ENCODE measurements at regions of chr9 and their contacts with region 1.

Region 1: GRCh38 chr9:78004478-78005229 is 27.0 kb downstream of the GNAQ start:
- DNase-seq: peak in 3 of 6 donors; percentile 34 to 46 (median 44)
- ATAC-seq: peak; percentile 87 to 94 (median 90)
- H3K4me3 ChIP-seq: no peak overlapping the region
- H3K27ac ChIP-seq: peak overlapping the region in 2 of 4 donors; percentile 23 to 37
- H3K4me1 ChIP-seq: peaks cover 21 to 41% (median 23%) of the 10 kb centered on the region in 3 donors
- H3K27me3 ChIP-seq: no peaks in the 10 kb centered on the region
- CTCF ChIP-seq: peak in 3 of 4 donors; percentile 23 to 55 (median 37)

Region 2: DNA sequence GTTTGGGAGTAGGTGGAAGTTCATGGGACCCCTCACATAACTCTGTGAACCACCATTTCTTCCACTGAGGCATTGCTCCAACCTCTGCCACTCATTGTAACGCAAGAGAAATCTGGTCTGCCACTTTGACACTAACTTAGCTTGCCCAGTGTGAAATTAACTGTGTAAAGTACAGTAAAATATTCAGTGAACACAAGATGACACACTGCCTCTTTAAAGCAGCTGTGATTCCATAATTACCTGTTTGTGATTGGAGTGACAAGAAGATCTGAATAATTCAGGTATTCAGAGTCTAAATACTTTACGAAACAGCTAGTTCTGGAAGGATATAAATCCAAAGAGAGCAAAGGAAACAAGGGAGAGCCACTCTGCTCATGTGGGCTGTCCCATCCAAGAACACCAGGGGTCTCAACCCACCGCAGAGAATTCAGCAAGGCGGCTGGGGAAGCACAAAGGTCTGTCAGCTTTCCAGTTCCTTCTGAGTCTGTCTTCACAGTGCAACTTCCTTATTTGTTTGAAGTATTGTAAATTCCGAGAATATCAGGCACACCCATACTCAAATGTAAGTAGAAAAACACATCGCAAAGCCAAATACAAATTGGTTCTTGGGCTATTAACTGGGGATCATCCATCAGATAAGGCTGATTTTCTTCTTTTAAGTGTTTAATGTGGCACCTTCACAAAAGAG is 60.0 kb before region 1 on chr9:
- intact Hi-C with region 1: loop called in 1 of 3 experiments (anchors 10 kb)
- DNase-seq: no peak
- ATAC-seq: peak in 3 of 4 donors; percentile 33 to 56 (median 41)
- H3K4me3 ChIP-seq: no peak overlapping the region
- H3K27ac ChIP-seq: peak overlapping the region in 1 of 4 donors; percentile 17
- H3K4me1 ChIP-seq: peaks cover 19 to 40% (median 27%) of the 10 kb centered on the region in 3 donors
- H3K27me3 ChIP-seq: no peaks in the 10 kb centered on the region
- CTCF ChIP-seq: no peak

Region 3: GRCh38 chr9:78064075-78064474 is 59.4 kb after region 1 on chr9:
- intact Hi-C with region 1: no loop called
- DNase-seq: peak in 1 of 6 donors; percentile 9
- ATAC-seq: peak in 1 of 4 donors; percentile 67
- H3K4me3 ChIP-seq: no peak overlapping the region
- H3K27ac ChIP-seq: no peak overlapping the region
- H3K4me1 ChIP-seq: no peaks in the 10 kb centered on the region
- H3K27me3 ChIP-seq: no peaks in the 10 kb centered on the region
- CTCF ChIP-seq: no peak

Region 4: GRCh38 chr9:79073201-79073600 is 1068.5 kb after region 1 on chr9:
- intact Hi-C with region 1: no loop called
- DNase-seq: no peak
- ATAC-seq: no peak
- H3K4me3 ChIP-seq: no peak overlapping the region
- H3K27ac ChIP-seq: no peak overlapping the region
- H3K4me1 ChIP-seq: no peaks in the 10 kb centered on the region
- H3K27me3 ChIP-seq: no peaks in the 10 kb centered on the region
- CTCF ChIP-seq: no peak

Measured in pancreas (tissue), 10 donors.